ENCODE measurements at regions of chr15 and their contacts with region 1.

Region 1: GRCh38 chr15:58749532-58750337 is at the start of gene ADAM10:
- DNase-seq: peak; percentile 99
- H3K4me3 ChIP-seq: peak within 1 kb of the TSS; percentile 98
- H3K4me3 Mint-ChIP-seq: peak within 1 kb of the TSS; percentile 87
- H3K27ac Mint-ChIP-seq: peak within 1 kb of the TSS; percentile 89
- H3K4me1 ChIP-seq: peaks cover 25% of the 10 kb centered on the region
- H3K4me1 Mint-ChIP-seq: peaks cover 8% of the 10 kb centered on the region
- H3K27me3 ChIP-seq: no peaks in the 10 kb centered on the region
- H3K27me3 Mint-ChIP-seq: no peaks in the 10 kb centered on the region
- CTCF ChIP-seq: no peak
- total RNA-seq, gene ADAM10: 168 and 170 TPM in 2 replicates

Region 2: DNA sequence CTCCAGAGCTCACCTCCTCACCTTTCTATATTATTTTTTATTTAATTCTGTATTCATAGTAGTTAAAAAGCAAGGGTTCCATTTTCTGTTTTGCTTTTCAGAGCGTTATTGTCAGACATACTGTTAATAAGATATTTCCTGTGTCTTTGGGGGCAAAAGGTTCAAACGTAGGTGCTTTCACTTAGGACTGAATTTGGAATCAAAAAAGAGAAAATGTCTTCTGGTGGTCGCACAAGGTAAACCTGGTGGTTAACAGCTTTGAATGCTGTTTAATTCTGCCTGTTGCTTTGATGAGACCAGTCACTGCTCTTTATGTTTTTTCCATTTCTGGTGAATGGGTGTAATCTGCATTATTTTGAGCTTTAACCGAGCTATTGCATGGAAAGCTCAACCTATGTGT is 1618.8 kb before region 1 on chr15:
- CTCF ChIA-PET with region 1: no interaction called
- POLR2A ChIA-PET with region 1: no interaction called
- intact Hi-C with region 1: no loop called
- DNase-seq: no peak
- H3K4me3 ChIP-seq: no peak overlapping the region
- H3K4me3 Mint-ChIP-seq: no peak overlapping the region
- H3K27ac Mint-ChIP-seq: no peak overlapping the region
- H3K4me1 ChIP-seq: no peaks in the 10 kb centered on the region
- H3K4me1 Mint-ChIP-seq: no peaks in the 10 kb centered on the region
- H3K27me3 ChIP-seq: no peaks in the 10 kb centered on the region
- H3K27me3 Mint-ChIP-seq: no peaks in the 10 kb centered on the region
- CTCF ChIP-seq: no peak

Region 3: DNA sequence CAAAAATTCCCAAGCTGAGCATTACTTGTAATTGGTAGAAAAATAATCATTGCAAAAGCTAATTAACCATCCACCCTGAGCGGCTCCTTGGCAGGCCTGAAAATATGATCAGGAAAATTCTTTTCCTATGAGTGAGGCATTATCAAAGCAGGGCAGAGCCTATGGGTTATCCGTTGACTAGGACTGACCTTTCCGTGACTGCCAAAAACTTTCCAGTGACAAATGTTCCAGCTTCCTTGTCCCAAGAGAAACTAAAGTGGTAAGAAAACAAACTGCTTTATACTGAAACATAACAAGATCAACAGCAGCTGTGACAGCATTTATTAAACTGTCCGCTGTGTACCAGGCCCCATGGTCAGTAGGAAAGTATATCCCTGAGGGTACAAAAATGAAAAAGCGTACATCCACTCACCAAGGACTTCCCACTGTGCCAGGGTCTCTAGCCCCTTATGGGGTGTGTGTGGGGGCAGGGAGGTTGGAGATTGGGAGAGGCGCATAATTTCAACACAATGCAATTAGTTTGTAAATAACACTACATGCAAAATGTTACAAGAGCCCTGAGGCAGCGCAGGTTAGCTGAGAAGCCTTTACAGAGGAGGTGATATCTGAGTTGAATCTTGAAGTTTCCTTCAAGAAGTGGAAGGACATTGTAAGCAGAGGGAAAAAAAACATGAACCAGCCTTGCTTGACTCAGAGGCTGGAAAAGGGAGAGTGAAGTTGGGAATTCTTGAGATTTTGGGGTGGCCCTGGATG is 309.4 kb before region 1 on chr15:
- CTCF ChIA-PET with region 1: no interaction called
- POLR2A ChIA-PET with region 1: interaction called, 8 read pairs
- intact Hi-C with region 1: loop called (anchors 10 kb)
- DNase-seq: no peak
- H3K4me3 ChIP-seq: no peak overlapping the region
- H3K4me3 Mint-ChIP-seq: peak overlapping the region; percentile 13
- H3K27ac Mint-ChIP-seq: peak overlapping the region; percentile 51
- H3K4me1 ChIP-seq: peaks cover 85% of the 10 kb centered on the region
- H3K4me1 Mint-ChIP-seq: peaks cover 36% of the 10 kb centered on the region
- H3K27me3 ChIP-seq: no peaks in the 10 kb centered on the region
- H3K27me3 Mint-ChIP-seq: no peaks in the 10 kb centered on the region
- CTCF ChIP-seq: no peak

Region 4: GRCh38 chr15:58734859-58735258 is 14.9 kb before region 1 on chr15:
- CTCF ChIA-PET with region 1: interaction called, 4 read pairs
- POLR2A ChIA-PET with region 1: interaction called, 30 read pairs
- intact Hi-C with region 1: no loop called
- DNase-seq: peak; percentile 29 to 47
- H3K4me3 ChIP-seq: no peak overlapping the region
- H3K4me3 Mint-ChIP-seq: no peak overlapping the region
- H3K27ac Mint-ChIP-seq: peak overlapping the region; percentile 25
- H3K4me1 ChIP-seq: peaks cover 16% of the 10 kb centered on the region
- H3K4me1 Mint-ChIP-seq: peaks cover 20% of the 10 kb centered on the region
- H3K27me3 ChIP-seq: no peaks in the 10 kb centered on the region
- H3K27me3 Mint-ChIP-seq: no peaks in the 10 kb centered on the region
- CTCF ChIP-seq: no peak

Region 5: GRCh38 chr15:58761010-58761388 is 11.3 kb after region 1 on chr15:
- CTCF ChIA-PET with region 1: no interaction called
- POLR2A ChIA-PET with region 1: no interaction called
- intact Hi-C with region 1: no loop called
- DNase-seq: no peak
- H3K4me3 ChIP-seq: no peak overlapping the region
- H3K4me3 Mint-ChIP-seq: no peak overlapping the region
- H3K27ac Mint-ChIP-seq: no peak overlapping the region
- H3K4me1 ChIP-seq: no peaks in the 10 kb centered on the region
- H3K4me1 Mint-ChIP-seq: no peaks in the 10 kb centered on the region
- H3K27me3 ChIP-seq: no peaks in the 10 kb centered on the region
- H3K27me3 Mint-ChIP-seq: no peaks in the 10 kb centered on the region
- CTCF ChIP-seq: no peak

Region 6: DNA sequence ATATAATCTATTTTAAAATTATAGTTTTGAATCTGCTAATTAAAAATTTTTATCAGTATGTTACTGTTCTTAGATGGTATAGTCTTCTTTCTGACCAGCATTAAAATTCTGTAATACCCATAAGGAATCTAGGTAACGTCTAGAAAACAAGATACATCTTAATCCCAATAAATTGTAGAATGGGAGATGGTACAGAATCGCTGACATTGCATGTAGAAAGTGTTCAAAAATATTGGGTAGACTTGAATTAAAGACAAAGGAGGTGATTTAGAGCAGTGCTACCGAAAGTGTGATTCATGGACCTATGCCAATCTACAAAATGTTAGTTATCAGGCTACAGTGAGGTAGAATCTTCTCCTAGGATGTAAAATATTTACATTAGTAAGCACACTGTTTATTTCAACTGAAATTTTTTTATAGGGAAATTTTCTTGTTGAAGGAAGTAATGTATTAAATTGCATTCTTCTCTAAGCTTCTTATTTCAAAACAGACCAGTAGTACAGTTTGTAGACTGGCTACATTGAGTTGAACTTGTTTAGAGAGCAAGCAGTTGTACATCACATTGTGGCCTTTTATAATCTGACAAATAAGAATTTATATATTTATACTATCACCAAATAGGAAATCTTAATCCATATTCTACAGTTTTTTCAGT is 38.4 kb after region 1 on chr15:
- CTCF ChIA-PET with region 1: no interaction called
- POLR2A ChIA-PET with region 1: no interaction called
- intact Hi-C with region 1: no loop called
- DNase-seq: no peak
- H3K4me3 ChIP-seq: no peak overlapping the region
- H3K4me3 Mint-ChIP-seq: no peak overlapping the region
- H3K27ac Mint-ChIP-seq: no peak overlapping the region
- H3K4me1 ChIP-seq: peaks cover 10% of the 10 kb centered on the region
- H3K4me1 Mint-ChIP-seq: peaks cover 17% of the 10 kb centered on the region
- H3K27me3 ChIP-seq: no peaks in the 10 kb centered on the region
- H3K27me3 Mint-ChIP-seq: no peaks in the 10 kb centered on the region
- CTCF ChIP-seq: no peak

Region 7: GRCh38 chr15:58987489-58988005 is 237.8 kb after region 1 on chr15 and contains the start of gene RNF111:
- CTCF ChIA-PET with region 1: no interaction called
- POLR2A ChIA-PET with region 1: no interaction called
- intact Hi-C with region 1: no loop called
- DNase-seq: peak; percentile 89 to 94
- H3K4me3 ChIP-seq: peak within 1 kb of the TSS; percentile 94
- H3K4me3 Mint-ChIP-seq: peak within 1 kb of the TSS; percentile 87
- H3K27ac Mint-ChIP-seq: peak within 1 kb of the TSS; percentile 81
- H3K4me1 ChIP-seq: peaks cover 17% of the 10 kb centered on the region; the same call in 1 of the 2 replicates
- H3K4me1 Mint-ChIP-seq: no peaks in the 10 kb centered on the region
- H3K27me3 ChIP-seq: no peaks in the 10 kb centered on the region
- H3K27me3 Mint-ChIP-seq: peaks cover 4% of the 10 kb centered on the region
- CTCF ChIP-seq: no peak
- total RNA-seq, gene RNF111: 26.1 and 30.5 TPM in 2 replicates